ENCODE measurements at regions of chr17 and their contacts with region 1.

Region 1: GRCh38 chr17:75405365-75406221 is at the start of gene GRB2:
- DNase-seq: peak; percentile 98 to 100 (median 100)
- ATAC-seq: peak; percentile 93
- H3K4me3 ChIP-seq: peak within 1 kb of the TSS; percentile 83
- H3K4me3 Mint-ChIP-seq: peak within 1 kb of the TSS; percentile 91 to 100 (median 96)
- H3K27ac ChIP-seq: peak within 1 kb of the TSS; percentile 91
- H3K27ac Mint-ChIP-seq: peak within 1 kb of the TSS; percentile 84 to 98 (median 95)
- H3K4me1 ChIP-seq: peaks cover 31 to 33% of the 10 kb centered on the region in 2 donors
- H3K4me1 Mint-ChIP-seq: peaks cover 26 to 51% (median 47%) of the 10 kb centered on the region in 7 donors
- H3K27me3 ChIP-seq: no peaks in the 10 kb centered on the region
- H3K27me3 Mint-ChIP-seq: no peaks in the 10 kb centered on the region
- total RNA-seq, gene GRB2: 112 to 167 (median 139) TPM

Region 2: GRCh38 chr17:74873038-74873873 is 532.3 kb before region 1 on chr17:
- CTCF ChIA-PET with region 1: no interaction called
- POLR2A ChIA-PET with region 1: no interaction called
- intact Hi-C with region 1: loop called (anchors 1 to 2 kb)
- DNase-seq: peak; percentile 91 to 100 (median 98)
- ATAC-seq: peak; percentile 97
- H3K4me3 ChIP-seq: peak overlapping the region; percentile 87
- H3K4me3 Mint-ChIP-seq: peak overlapping the region; percentile 74 to 96 (median 88)
- H3K27ac ChIP-seq: peak overlapping the region; percentile 91
- H3K27ac Mint-ChIP-seq: peak overlapping the region; percentile 94 to 99 (median 97)
- H3K4me1 ChIP-seq: peaks cover 11 to 14% of the 10 kb centered on the region in 2 donors
- H3K4me1 Mint-ChIP-seq: peaks cover 18 to 41% (median 22%) of the 10 kb centered on the region in 7 donors
- H3K27me3 ChIP-seq: no peaks in the 10 kb centered on the region
- H3K27me3 Mint-ChIP-seq: peaks cover 0 to 3% (median 0%) of the 10 kb centered on the region in 5 donors

Region 3: GRCh38 chr17:75154195-75155106 is 251.1 kb before region 1 on chr17 and contains the start of gene JPT1:
- CTCF ChIA-PET with region 1: no interaction called
- POLR2A ChIA-PET with region 1: no interaction called
- intact Hi-C with region 1: loop called in 1 of 2 experiments (anchors 1 kb)
- DNase-seq: peak; percentile 82 to 98 (median 96)
- ATAC-seq: peak; percentile 100
- H3K4me3 ChIP-seq: peak within 1 kb of the TSS; percentile 84
- H3K4me3 Mint-ChIP-seq: peak within 1 kb of the TSS; percentile 88 to 98 (median 94)
- H3K27ac ChIP-seq: peak within 1 kb of the TSS; percentile 80
- H3K27ac Mint-ChIP-seq: peak within 1 kb of the TSS; percentile 78 to 96 (median 92)
- H3K4me1 ChIP-seq: peaks cover 0 to 18% of the 10 kb centered on the region in 2 donors
- H3K4me1 Mint-ChIP-seq: peaks cover 11 to 39% (median 36%) of the 10 kb centered on the region in 7 donors
- H3K27me3 ChIP-seq: no peaks in the 10 kb centered on the region
- H3K27me3 Mint-ChIP-seq: no peaks in the 10 kb centered on the region
- total RNA-seq, gene JPT1: 12.3 to 227 (median 29.3) TPM

Region 4: DNA sequence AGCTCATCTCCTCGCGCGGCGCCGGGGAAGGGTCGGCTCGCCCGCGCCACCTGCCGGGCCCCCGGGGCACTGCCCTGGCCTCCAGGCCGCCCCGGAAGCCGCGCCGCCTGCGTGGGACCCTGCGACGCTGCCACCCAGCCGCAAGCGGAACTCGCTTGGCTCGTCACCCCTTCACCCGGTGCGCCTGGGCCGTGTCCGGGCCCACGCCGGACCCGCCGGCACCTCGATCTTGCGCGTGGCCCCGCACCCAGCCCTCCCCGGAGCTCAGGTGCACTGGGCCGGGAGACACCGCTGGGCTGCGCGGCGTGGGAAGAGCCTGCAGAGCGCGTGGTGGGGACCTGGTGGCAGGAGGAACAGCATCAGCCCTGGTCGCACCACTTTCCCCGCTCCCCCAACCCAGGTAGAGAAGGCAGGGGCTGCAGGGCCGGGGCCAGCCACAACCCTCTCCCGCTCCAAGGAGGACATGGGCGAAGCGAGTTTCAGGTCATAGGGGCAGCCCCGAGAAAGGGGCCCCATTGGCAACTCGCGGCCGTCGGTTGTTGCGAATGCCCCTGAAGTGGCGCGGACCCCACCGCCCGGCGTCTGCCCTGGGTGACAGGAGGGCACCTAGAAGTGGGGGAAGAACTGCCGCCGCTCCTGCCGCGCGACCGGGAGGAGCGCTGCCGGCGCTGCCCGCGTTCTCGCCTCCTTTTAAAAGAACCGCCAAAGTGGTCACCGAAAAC is 134.2 kb before region 1 on chr17:
- CTCF ChIA-PET with region 1: interaction called, 4 read pairs
- POLR2A ChIA-PET with region 1: interaction called, 14 read pairs
- intact Hi-C with region 1: loop called (anchors 1 to 2 kb)
- DNase-seq: peak; percentile 80 to 96 (median 90)
- ATAC-seq: peak; percentile 96
- H3K4me3 ChIP-seq: peak overlapping the region; percentile 75
- H3K4me3 Mint-ChIP-seq: peak overlapping the region; percentile 67 to 87 (median 84)
- H3K27ac ChIP-seq: peak overlapping the region; percentile 84
- H3K27ac Mint-ChIP-seq: peak overlapping the region; percentile 57 to 90 (median 85)
- H3K4me1 ChIP-seq: peaks cover 15 to 24% of the 10 kb centered on the region in 2 donors
- H3K4me1 Mint-ChIP-seq: peaks cover 5 to 41% (median 34%) of the 10 kb centered on the region in 7 donors
- H3K27me3 ChIP-seq: no peaks in the 10 kb centered on the region
- H3K27me3 Mint-ChIP-seq: no peaks in the 10 kb centered on the region

Region 5: DNA sequence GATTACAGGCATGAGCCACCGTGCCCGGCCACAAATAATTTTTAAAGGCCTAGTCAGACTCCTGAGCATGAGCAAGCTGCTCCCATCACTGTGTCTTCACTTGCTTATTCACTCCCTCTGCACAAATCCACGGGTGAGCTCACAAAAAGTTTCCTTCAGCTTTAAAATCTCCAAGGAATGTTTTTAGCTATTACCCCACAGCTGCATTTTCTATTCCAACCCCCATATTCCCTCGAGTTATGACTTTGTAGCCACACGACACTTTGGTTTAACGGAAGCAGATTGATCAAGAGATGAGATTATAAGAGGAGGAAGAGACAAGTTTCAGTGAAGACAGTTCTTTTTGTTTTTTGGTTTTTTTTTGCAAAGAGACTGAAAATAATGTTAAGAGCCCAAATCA is 67.3 kb before region 1 on chr17:
- CTCF ChIA-PET with region 1: interaction called, 4 read pairs
- POLR2A ChIA-PET with region 1: interaction called, 10 read pairs
- intact Hi-C with region 1: loop called (anchors 1 to 2 kb)
- DNase-seq: peak in 6 of 9 donors; percentile 30 to 55 (median 47)
- ATAC-seq: peak; percentile 63
- H3K4me3 ChIP-seq: peak overlapping the region; percentile 4
- H3K4me3 Mint-ChIP-seq: peak overlapping the region; percentile 63 to 84 (median 78)
- H3K27ac ChIP-seq: peak overlapping the region; percentile 58
- H3K27ac Mint-ChIP-seq: peak overlapping the region; percentile 23 to 97 (median 86)
- H3K4me1 ChIP-seq: peaks cover 33 to 76% of the 10 kb centered on the region in 2 donors
- H3K4me1 Mint-ChIP-seq: peaks cover 58 to 92% (median 79%) of the 10 kb centered on the region in 7 donors
- H3K27me3 ChIP-seq: no peaks in the 10 kb centered on the region
- H3K27me3 Mint-ChIP-seq: no peaks in the 10 kb centered on the region

Region 6: GRCh38 chr17:75393523-75394331 is 11.9 kb before region 1 on chr17:
- CTCF ChIA-PET with region 1: no interaction called
- POLR2A ChIA-PET with region 1: interaction called, 21 read pairs
- intact Hi-C with region 1: loop called (anchors 1 kb)
- DNase-seq: peak; percentile 50 to 79 (median 55)
- ATAC-seq: peak; percentile 95
- H3K4me3 ChIP-seq: peak overlapping the region; percentile 55
- H3K4me3 Mint-ChIP-seq: peak overlapping the region; percentile 87 to 98 (median 93)
- H3K27ac ChIP-seq: peak overlapping the region; percentile 48
- H3K27ac Mint-ChIP-seq: peak overlapping the region; percentile 45 to 93 (median 83)
- H3K4me1 ChIP-seq: peaks cover 11 to 49% of the 10 kb centered on the region in 2 donors
- H3K4me1 Mint-ChIP-seq: peaks cover 70 to 95% (median 85%) of the 10 kb centered on the region in 7 donors
- H3K27me3 ChIP-seq: no peaks in the 10 kb centered on the region
- H3K27me3 Mint-ChIP-seq: no peaks in the 10 kb centered on the region

Region 7: DNA sequence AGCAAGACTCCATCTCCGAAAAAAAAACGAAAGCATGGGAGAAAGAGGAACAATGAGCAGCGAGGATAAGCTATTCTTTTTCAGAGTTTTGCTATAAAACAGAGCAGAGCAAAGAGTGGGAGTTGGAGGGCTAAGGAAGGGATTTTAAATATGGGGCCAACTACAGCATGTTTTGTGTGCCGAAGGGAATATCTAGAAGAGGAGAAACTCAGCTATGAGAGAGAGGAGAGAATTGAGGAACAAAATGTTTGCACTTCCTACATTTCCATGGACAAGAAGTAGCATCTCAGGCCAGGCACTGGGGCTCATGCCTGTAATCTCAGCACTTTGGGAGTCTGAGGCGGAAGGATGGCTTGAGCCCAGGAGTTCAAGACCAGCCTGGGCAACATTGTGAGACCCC is 12.9 kb after region 1 on chr17:
- CTCF ChIA-PET with region 1: no interaction called
- POLR2A ChIA-PET with region 1: no interaction called
- intact Hi-C with region 1: no loop called
- DNase-seq: no peak
- ATAC-seq: no peak
- H3K4me3 ChIP-seq: no peak overlapping the region
- H3K4me3 Mint-ChIP-seq: no peak overlapping the region
- H3K27ac ChIP-seq: no peak overlapping the region
- H3K27ac Mint-ChIP-seq: no peak overlapping the region
- H3K4me1 ChIP-seq: no peaks in the 10 kb centered on the region
- H3K4me1 Mint-ChIP-seq: peaks cover 0 to 4% (median 0%) of the 10 kb centered on the region in 7 donors
- H3K27me3 ChIP-seq: no peaks in the 10 kb centered on the region
- H3K27me3 Mint-ChIP-seq: peaks cover 0 to 33% (median 5%) of the 10 kb centered on the region in 5 donors

Region 8: GRCh38 chr17:75524953-75525719 is 119.5 kb after region 1 on chr17 and contains the start of gene LLGL2:
- CTCF ChIA-PET with region 1: interaction called, 3 read pairs
- POLR2A ChIA-PET with region 1: interaction called, 4 read pairs
- intact Hi-C with region 1: loop called in 1 of 2 experiments (anchors 2 kb)
- DNase-seq: peak; percentile 82 to 91 (median 89)
- ATAC-seq: peak; percentile 98
- H3K4me3 ChIP-seq: peak within 1 kb of the TSS; percentile 75
- H3K4me3 Mint-ChIP-seq: peak within 1 kb of the TSS; percentile 76 to 86 (median 82)
- H3K27ac ChIP-seq: peak within 1 kb of the TSS; percentile 67
- H3K27ac Mint-ChIP-seq: peak within 1 kb of the TSS in 7 of 9 donors; percentile 45 to 74 (median 59)
- H3K4me1 ChIP-seq: peaks cover 6 to 7% of the 10 kb centered on the region in 2 donors
- H3K4me1 Mint-ChIP-seq: peaks cover 0 to 20% (median 16%) of the 10 kb centered on the region in 7 donors
- H3K27me3 ChIP-seq: no peaks in the 10 kb centered on the region
- H3K27me3 Mint-ChIP-seq: peaks cover 0 to 11% (median 0%) of the 10 kb centered on the region in 5 donors
- total RNA-seq, gene LLGL2: 22.4 to 55.7 (median 33.7) TPM